Activated T-helper 2 cell treated with anti-CD3 and anti-CD28 coated beads, Interferon-gamma antibody, Interleukin-2, Interleukin-4, amounts not matched to agents 10 μg/mL and 5 μg/mL and 100 μg/mL, durations not matched to agents 14 hours and 24 hours and 36 hours (primary cell): ENCODE measurements at regions of chr18 and their contacts with region 1.

Region 1: DNA sequence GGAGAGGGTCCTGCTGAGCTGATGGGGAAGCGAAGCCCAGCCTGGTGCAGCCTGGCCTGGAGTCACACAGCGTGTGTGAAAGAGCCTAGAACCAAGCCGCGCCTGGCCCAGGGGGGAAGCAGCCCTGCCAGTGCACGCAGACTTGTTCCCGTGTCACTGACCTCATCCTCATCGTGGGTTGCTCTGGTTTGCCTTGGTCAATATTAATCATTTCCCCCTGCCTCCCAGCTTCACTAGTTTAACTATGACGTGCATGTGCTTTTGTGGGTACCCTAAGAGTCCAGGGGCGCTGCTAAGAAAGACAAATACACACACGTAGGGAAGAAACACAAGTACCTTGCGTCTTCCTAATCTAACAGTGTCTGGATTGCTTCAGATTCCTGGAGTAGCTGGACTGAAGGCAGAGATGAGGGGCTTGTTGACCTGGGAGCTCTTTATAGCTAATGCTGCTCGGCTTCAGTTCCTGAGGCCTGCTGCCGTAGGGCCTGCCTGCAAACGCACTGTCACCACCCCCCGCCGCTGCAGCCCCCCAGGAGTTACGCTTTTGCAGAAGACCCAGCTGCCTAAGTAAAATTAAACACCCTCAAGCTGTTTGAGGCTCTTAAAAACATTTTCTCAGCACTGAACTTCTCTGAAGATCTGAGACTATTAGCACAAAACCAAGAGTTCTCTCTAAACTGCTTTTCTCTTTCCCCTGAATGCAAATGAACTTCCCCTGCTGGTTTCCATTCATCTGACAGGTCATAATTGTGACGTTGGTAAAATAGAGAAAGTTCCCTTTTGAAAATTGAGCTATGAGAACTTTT is 159.2 kb downstream of the FAM210A start:
- DNase-seq: no peak
- H3K4me3 Mint-ChIP-seq: peak overlapping the region; percentile 57
- H3K27ac Mint-ChIP-seq: peak overlapping the region; percentile 94
- H3K4me1 Mint-ChIP-seq: peaks cover 67% of the 10 kb centered on the region
- H3K27me3 Mint-ChIP-seq: no peaks in the 10 kb centered on the region

Region 2: DNA sequence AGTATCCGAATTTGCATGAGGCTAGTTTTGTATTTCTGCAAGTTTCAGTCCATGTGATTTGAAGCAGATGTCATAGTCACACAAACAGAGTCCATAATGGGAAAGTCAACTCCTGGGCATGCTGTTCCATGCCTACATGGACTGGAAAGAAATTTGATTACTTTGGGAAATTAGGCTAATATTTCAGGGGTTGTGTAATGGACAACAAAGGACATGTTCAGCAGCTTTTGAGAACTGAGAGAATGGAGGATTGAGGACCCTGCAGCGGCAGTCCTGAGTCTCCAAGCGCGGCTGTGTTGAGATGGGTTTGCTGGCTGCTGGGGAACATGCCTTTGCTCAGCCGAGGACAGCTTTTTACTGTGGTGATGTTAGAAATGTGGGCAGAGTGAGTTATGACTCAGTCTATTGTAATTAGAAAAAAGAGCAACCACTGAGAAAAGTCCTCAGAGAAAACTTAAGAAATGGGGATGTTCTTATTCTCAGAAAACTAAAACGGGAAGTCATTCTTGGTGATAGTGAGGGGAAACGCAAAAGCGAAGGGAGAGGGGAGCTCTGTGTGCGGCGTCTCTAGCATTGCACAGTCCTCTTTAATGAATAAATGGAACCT is 10.1 kb after region 1 on chr18:
- intact Hi-C with region 1: loop called (anchors 1 kb)
- DNase-seq: peak; percentile 48
- H3K4me3 Mint-ChIP-seq: peak overlapping the region; percentile 61
- H3K27ac Mint-ChIP-seq: peak overlapping the region; percentile 82
- H3K4me1 Mint-ChIP-seq: peaks cover 45% of the 10 kb centered on the region
- H3K27me3 Mint-ChIP-seq: no peaks in the 10 kb centered on the region

Region 3: DNA sequence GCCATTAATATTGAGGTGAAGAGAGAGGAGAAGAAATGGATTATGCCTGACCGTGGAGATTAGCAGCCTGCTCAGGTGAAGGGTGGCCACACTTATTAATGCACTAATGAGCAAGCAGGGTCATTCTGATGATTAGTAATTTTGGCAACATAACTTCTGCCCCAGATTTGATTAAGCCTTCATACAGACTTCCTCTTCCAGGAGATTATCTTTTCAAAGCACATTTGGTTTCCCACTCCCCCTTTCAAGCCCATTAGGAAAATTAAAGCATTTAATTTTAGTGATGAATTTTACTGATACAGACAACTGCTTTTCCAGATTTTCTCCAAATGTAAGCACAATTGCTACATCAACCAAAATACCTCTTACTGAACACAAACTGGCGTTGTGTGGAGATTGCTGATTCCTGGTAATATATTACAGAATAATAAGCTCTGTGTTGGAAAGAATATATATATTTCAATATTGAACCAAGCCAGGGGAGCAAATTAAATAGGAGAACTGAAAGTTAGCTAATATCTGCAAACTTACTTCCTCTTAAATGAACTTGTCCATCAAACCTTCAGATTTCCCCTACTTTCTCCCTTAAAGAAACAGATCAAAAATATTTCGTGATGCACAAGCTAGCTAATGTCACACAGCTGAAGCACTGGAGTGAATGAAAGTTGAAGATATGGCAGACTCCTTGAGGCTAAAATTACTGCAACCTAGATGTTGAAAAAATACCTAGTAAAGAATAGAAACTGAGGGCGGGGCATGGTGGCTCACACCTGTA is 18.4 kb after region 1 on chr18:
- intact Hi-C with region 1: loop called (anchors 1 kb)
- DNase-seq: no peak
- H3K4me3 Mint-ChIP-seq: no peak overlapping the region
- H3K27ac Mint-ChIP-seq: peak overlapping the region; percentile 5
- H3K4me1 Mint-ChIP-seq: peaks cover 52% of the 10 kb centered on the region
- H3K27me3 Mint-ChIP-seq: no peaks in the 10 kb centered on the region